ENCODE measurements at regions of chr6 and their contacts with region 1.

Region 1: GRCh38 chr6:43247113-43247999 is 4.1 kb downstream of the TTBK1 start:
- DNase-seq: peak; percentile 81 to 98 (median 88)

Region 2: DNA sequence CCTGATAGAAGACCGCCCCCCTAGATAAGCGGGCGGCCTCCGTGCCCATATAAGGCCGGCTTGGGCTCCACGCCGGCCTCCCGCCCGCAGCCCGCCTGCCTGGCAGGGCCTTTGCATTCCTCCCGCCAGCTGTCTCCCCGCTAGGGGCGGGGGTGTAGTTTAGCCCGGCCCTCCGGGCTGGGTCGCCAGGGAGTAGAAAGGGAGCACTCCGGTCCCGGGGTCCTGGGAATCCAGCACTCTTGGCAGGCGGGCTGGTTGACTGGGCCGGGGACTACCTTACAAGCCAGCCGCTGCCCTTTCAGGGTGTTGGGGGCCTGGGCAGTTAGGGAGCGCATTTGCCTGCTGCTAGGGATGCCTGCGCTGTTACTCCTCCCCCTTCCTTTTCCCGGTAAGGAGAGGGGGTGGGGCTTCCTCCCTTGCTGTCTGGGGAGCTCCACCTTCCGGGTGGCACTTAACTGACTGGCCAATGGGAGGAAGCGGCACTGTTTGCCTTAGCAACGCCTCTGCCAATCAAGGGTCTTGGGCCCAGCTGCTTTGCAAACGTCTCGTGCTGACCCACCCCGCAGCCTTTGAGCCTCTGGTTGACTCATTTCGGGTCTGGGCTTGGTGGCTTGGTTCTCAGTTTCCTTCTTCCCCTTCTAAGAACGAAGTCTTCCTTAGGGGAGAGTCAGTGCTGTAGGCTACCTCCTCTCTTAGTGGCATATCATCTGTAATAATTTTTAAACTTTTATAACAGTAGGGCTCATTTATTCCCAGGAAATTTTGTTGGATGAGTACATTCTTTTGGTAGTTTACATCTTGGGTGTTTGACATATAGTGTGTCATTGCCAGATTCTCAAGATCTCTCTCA is 72.9 kb before region 1 on chr6:
- intact Hi-C with region 1: loop called (anchors 10 kb)
- DNase-seq: peak; percentile 90 to 100 (median 96)

Measured in posterior cingulate gyrus (tissue), 11 donors.